ENCODE measurements at regions of chr7 and their contacts with region 1.

Region 1: DNA sequence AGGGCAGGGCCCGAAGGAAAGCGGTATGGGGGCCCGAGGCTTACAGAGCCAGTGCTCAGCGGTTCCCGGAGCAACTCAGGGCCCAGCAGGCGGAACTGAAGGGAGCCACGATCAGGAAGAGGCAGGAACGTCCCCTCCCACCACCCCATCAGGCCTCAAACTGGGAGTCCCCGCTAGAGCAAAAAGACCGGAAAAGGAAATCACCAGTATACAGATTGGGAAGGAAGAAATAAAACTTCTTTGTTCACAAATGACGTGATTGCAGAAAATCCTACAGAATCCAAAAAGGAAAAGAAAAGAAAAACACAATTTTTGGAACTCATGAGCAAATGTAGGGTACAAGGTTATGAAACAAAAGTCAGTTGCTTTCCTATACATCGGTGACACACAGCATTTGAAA is 21.6 kb upstream of the ZFAND2A start:
- DNase-seq: no peak
- H3K4me3 Mint-ChIP-seq: no peak overlapping the region
- H3K27ac Mint-ChIP-seq: no peak overlapping the region
- H3K4me1 Mint-ChIP-seq: peaks cover 9% of the 10 kb centered on the region
- H3K27me3 Mint-ChIP-seq: peaks cover 11% of the 10 kb centered on the region

Region 2: GRCh38 chr7:801940-802381 is 379.7 kb before region 1 on chr7:
- CTCF ChIA-PET with region 1: no interaction called
- POLR2A ChIA-PET with region 1: no interaction called
- DNase-seq: no peak
- H3K4me3 Mint-ChIP-seq: no peak overlapping the region
- H3K27ac Mint-ChIP-seq: no peak overlapping the region
- H3K4me1 Mint-ChIP-seq: no peaks in the 10 kb centered on the region
- H3K27me3 Mint-ChIP-seq: peaks cover 3% of the 10 kb centered on the region

Region 3: GRCh38 chr7:871900-872537 is 309.6 kb before region 1 on chr7:
- CTCF ChIA-PET with region 1: no interaction called
- POLR2A ChIA-PET with region 1: no interaction called
- DNase-seq: no peak
- H3K4me3 Mint-ChIP-seq: no peak overlapping the region
- H3K27ac Mint-ChIP-seq: no peak overlapping the region
- H3K4me1 Mint-ChIP-seq: peaks cover 18% of the 10 kb centered on the region
- H3K27me3 Mint-ChIP-seq: no peaks in the 10 kb centered on the region

Region 4: DNA sequence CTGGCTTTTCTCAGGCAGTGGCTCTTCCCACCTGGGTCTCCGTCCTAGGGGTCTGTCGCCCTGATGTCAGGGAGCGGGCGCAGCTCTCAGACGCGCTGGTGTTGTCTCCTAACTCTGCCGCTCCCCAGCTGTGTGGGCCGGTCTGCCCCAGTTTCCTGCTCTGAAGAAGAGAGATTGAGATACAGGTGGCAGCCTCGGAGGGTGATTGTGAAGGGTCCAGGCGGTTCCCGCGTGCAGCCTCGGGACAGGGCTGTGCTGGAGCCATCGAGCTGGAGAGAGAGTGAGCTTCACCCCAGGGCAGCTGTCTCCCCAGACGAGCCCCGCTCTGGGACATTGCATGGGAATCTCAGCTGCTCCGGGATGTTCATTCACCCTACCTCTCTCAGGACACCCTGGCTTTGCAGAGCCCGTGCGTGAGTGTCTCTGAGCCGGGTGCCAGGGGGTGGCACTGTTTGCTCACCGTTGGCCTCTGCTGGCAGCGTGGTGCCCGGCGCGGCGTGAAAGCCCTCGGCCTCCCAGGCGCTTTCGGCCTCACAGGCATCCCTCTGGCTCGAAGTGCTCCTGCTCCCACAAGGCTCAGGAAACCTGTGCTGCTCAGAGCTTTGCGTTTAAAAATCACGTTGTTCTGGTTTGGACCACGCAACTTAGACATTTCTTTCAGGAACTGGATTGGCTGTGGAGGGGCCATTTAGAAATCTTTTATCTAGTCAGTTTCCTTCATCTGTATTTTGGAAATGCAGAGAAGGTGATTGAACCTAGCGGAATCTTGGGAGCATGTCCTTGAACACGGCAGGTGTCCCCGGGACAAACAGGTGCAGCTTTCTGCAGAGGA is 12.2 kb after region 1 on chr7:
- CTCF ChIA-PET with region 1: interaction called, 50 read pairs
- POLR2A ChIA-PET with region 1: no interaction called
- DNase-seq: peak; percentile 53
- H3K4me3 Mint-ChIP-seq: no peak overlapping the region
- H3K27ac Mint-ChIP-seq: peak overlapping the region; percentile 25
- H3K4me1 Mint-ChIP-seq: peaks cover 22% of the 10 kb centered on the region
- H3K27me3 Mint-ChIP-seq: peaks cover 4% of the 10 kb centered on the region

Region 5: DNA sequence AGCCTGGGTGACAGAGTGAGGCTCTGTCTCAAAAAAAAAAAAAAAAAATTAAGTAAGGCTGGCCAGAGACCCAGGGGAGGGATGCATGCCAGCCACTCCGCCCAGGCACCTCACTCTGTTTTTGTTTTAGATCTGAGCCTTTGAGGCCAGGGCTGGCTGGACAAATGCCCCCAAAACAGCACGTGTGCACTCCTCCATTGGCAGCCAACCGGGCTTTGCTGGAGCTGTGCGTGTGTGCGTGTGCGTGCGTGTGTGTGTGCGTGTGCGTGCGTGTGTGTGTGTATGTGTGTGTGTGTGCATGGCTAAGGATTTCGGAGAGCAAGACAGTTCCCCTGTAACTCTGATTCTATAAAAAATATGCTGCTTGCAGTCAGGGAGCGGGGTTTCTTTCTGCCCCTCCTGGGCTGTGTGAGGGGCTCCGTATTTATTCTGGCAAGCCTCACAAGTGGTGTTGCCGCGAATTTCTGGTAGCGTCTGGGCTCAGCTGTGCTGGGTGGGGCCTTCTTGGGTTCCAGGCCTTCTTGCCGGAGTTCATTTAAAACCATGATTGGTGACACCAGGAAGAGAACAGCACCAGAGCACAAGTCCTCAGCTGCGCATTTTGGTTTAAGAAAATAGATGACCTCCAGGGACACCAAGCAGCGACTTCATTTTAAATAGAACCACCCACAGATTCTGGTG is 23.0 kb after region 1 on chr7:
- CTCF ChIA-PET with region 1: no interaction called
- POLR2A ChIA-PET with region 1: no interaction called
- DNase-seq: no peak
- H3K4me3 Mint-ChIP-seq: no peak overlapping the region
- H3K27ac Mint-ChIP-seq: no peak overlapping the region
- H3K4me1 Mint-ChIP-seq: no peaks in the 10 kb centered on the region
- H3K27me3 Mint-ChIP-seq: peaks cover 6% of the 10 kb centered on the region